Right ventricle myocardium inferior (tissue), 1 donor: ENCODE measurements at regions of chr12 and their contacts with region 1.

Region 1: DNA sequence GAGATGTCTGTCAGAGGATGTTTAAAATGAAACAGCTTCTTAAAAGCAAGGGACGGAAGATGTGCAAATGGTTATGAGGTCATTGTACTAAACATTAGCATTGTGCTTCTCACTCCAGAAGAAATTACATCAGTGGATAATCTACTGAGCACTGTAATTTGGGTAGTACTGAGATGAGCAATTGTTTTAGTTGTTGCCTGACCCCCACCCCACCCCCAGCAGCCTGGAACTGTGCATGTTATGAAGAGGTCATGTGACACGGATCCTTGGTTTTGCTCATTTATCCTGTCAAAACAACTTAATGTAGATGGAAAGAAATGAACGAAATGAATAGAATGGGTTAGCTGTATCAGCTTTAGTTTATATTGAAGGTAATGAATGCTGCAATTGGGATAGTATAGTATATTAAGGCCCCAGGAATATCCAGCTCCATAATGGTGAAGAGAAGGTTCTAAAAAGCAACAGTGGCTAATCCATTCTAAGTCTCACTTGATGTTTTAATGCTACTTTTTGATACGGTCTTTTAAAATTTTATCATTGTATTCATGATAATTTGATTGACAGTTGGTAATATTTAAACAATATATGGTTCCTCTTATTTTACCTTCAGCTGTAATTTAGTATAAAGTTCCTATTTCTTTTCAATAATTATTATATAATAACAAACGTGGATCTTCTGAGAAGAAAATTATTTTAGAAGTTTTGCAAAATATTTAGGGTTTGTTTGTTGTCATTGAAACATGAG is 58.5 kb downstream of the WNK1 start:
- DNase-seq: no peak
- ATAC-seq: no peak

Region 2: DNA sequence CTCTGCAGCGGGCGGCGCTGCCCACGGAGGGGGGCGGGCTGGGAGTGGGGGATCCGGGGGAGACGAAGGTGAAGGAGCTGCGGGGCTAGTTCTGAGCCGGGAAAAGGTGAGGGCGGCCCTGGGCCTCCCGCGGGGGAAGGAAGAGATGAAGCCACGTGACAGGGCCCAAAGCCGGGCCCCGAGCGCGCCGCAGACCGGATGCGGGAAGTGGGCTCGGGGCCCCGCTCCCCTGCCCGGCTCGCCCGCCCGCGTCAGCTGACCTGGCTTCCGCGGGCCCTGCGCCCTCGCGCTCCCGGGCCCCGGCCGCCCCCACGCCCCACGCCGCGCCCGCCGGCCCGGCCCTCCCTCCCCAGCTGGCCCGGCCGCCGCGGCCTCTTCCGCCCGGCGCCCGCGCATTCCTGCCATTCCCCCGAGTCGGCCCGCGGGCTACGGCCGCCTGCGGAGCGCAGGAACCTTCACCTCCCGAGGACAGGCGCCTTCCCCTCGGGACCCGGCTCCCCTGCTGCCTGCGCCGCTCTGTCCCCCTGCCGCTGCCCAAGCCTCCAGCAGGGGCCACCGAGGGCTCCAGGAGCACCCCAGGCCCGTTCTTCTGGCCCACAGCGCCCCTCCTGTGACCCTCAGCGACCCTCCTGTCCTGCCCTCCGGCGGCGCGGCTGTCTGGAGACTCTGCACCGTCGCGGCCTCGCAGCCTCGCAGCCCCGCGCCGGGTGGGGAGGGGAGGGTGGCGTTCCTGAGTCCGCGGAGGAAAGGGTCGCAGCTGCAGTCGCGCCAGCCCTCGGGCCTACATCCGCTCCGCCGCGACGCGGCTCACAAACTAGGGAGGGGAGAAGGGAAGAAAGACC is 168.0 kb before region 1 on chr12:
- intact Hi-C with region 1: loop called (anchors 10 kb)
- DNase-seq: peak; percentile 93
- ATAC-seq: peak; percentile 69

Region 3: GRCh38 chr12:685388-685787 is 125.5 kb before region 1 on chr12:
- intact Hi-C with region 1: no loop called
- DNase-seq: no peak
- ATAC-seq: no peak